Tibial artery (tissue), 4 donors: ENCODE measurements at regions of chr5 and their contacts with region 1.

Region 1: GRCh38 chr5:53333160-53333559 is 147.3 kb upstream of the FST start:
- DNase-seq: no peak
- H3K4me3 ChIP-seq: no peak overlapping the region
- H3K27ac ChIP-seq: peak overlapping the region in 1 of 2 donors; percentile 23
- H3K4me1 ChIP-seq: peaks cover 0 to 21% (median 4%) of the 10 kb centered on the region in 4 donors
- H3K27me3 ChIP-seq: no peaks in the 10 kb centered on the region
- CTCF ChIP-seq: no peak

Region 2: DNA sequence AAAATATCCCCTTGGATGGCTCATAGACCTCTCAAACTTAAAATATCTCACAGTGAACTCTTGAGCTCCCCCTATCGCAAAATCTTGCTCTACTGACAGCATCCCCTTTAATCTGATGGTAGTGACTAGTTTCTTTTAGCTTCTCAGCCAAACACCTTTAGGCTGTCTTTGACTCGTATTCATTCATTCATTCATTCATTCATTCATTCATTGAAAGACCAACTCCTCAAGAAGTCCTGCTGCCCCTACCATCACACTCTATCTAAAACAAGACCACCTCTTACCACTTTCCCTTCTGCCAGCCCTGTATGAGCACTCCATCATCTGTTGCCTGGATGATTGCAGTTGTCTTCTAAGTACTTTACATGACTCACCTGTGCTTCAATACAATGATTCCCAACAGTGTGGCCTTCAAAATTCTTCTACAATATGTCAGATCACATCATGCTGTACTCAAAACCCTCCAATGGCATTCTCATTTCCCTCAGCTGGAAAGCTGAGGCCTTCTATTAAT is 297.2 kb before region 1 on chr5:
- intact Hi-C with region 1: no loop called
- DNase-seq: no peak
- H3K4me3 ChIP-seq: no peak overlapping the region
- H3K27ac ChIP-seq: no peak overlapping the region
- H3K4me1 ChIP-seq: peaks cover 0 to 26% (median 6%) of the 10 kb centered on the region in 4 donors
- H3K27me3 ChIP-seq: no peaks in the 10 kb centered on the region
- CTCF ChIP-seq: no peak

Region 3: GRCh38 chr5:53291047-53291927 is 41.9 kb before region 1 on chr5:
- intact Hi-C with region 1: loop called (anchors 1 kb)
- DNase-seq: no peak
- H3K4me3 ChIP-seq: no peak overlapping the region
- H3K27ac ChIP-seq: no peak overlapping the region
- H3K4me1 ChIP-seq: no peaks in the 10 kb centered on the region
- H3K27me3 ChIP-seq: no peaks in the 10 kb centered on the region
- CTCF ChIP-seq: no peak

Region 4: GRCh38 chr5:53481887-53482716 is 148.9 kb after region 1 on chr5:
- intact Hi-C with region 1: no loop called
- DNase-seq: peak; percentile 77 to 90
- H3K4me3 ChIP-seq: peak overlapping the region; percentile 59 to 74
- H3K27ac ChIP-seq: peak overlapping the region; percentile 58 to 66
- H3K4me1 ChIP-seq: peaks cover 0 to 24% (median 7%) of the 10 kb centered on the region in 4 donors
- H3K27me3 ChIP-seq: no peaks in the 10 kb centered on the region
- CTCF ChIP-seq: peak; percentile 62 to 64